Stomach (tissue), 19 donors: ENCODE measurements at regions of chr17 and their contacts with region 1.

Region 1: GRCh38 chr17:47310186-47310970 is 13.4 kb upstream of the EFCAB13 start:
- DNase-seq: no peak
- H3K4me3 ChIP-seq: no peak overlapping the region
- H3K27ac ChIP-seq: no peak overlapping the region
- H3K4me1 ChIP-seq: peaks cover 7 to 24% (median 9%) of the 10 kb centered on the region in 4 donors
- H3K27me3 ChIP-seq: no peaks in the 10 kb centered on the region
- CTCF ChIP-seq: no peak
- EP300 ChIP-seq: no peak
- POLR2A ChIP-seq: no peak

Region 2: GRCh38 chr17:47239619-47240374 is 70.6 kb before region 1 on chr17:
- intact Hi-C with region 1: loop called (anchors 5 kb)
- DNase-seq: peak; percentile 50 to 82
- H3K4me3 ChIP-seq: no peak overlapping the region
- H3K27ac ChIP-seq: peak overlapping the region; percentile 37 to 82 (median 80)
- H3K4me1 ChIP-seq: peaks cover 6 to 21% (median 12%) of the 10 kb centered on the region in 4 donors
- H3K27me3 ChIP-seq: no peaks in the 10 kb centered on the region
- CTCF ChIP-seq: no peak
- EP300 ChIP-seq: no peak
- POLR2A ChIP-seq: no peak